H1 (cell line): ENCODE measurements at regions of chr9 and their contacts with region 1.

Region 1: DNA sequence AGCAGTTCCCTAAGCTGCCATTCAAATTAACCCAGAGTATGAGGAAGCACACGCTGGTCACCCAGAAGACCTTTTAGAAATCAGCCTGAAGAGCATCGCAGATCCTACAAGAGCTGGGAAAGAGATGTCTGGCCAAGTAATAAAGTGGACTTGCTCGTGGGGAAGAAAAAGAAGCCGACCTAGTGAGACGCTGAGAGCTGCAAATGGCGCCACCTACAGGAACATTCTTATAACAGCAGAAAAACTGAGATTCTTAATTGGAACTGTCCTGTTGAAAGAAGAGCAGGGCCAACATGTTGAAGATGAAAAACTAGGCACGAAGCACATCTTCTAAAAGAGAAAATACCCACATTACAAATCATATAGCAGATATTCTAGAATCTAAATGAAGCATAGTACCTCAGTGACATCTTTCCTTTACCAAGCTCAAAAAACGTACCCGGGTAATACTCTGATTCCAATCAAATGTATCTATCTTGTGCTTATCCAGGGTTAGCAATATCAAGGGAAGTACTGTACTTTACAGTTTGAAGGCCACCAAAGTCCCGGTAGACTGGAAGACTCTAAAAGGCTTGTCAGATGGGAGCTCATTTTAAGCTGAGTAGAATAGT is 3.9 kb upstream of the GNAQ start:
- DNase-seq: no peak
- H3K4me3 ChIP-seq: no peak overlapping the region
- H3K27ac ChIP-seq: no peak overlapping the region
- H3K4me1 ChIP-seq: peaks cover 0 to 5% (median 0%) of the 10 kb centered on the region in 4 experiments; a peak in 3 of 7 replicates
- H3K27me3 ChIP-seq: no peaks in the 10 kb centered on the region
- CTCF ChIP-seq: peak; percentile 16 to 76 (median 74)
- EP300 ChIP-seq: no peak
- POLR2A ChIP-seq: no peak
- RAD21 ChIP-seq: peak; percentile 79 to 88

Region 2: GRCh38 chr9:77865385-77866047 is 170.0 kb before region 1 on chr9:
- CTCF ChIA-PET with region 1: no interaction called
- POLR2A ChIA-PET with region 1: no interaction called
- DNase-seq: no peak
- H3K4me3 ChIP-seq: no peak overlapping the region
- H3K27ac ChIP-seq: no peak overlapping the region
- H3K4me1 ChIP-seq: no peaks in the 10 kb centered on the region
- H3K27me3 ChIP-seq: no peaks in the 10 kb centered on the region
- CTCF ChIP-seq: no peak
- EP300 ChIP-seq: no peak
- POLR2A ChIP-seq: no peak
- RAD21 ChIP-seq: no peak

Region 3: GRCh38 chr9:77896938-77897667 is 138.4 kb before region 1 on chr9:
- CTCF ChIA-PET with region 1: interaction called, 13 read pairs
- POLR2A ChIA-PET with region 1: no interaction called
- DNase-seq: no peak
- H3K4me3 ChIP-seq: no peak overlapping the region
- H3K27ac ChIP-seq: no peak overlapping the region
- H3K4me1 ChIP-seq: peaks cover 0 to 3% (median 2%) of the 10 kb centered on the region in 4 experiments; a peak in 3 of 7 replicates
- H3K27me3 ChIP-seq: no peaks in the 10 kb centered on the region
- CTCF ChIP-seq: peak; percentile 34 to 62 (median 55)
- EP300 ChIP-seq: no peak
- POLR2A ChIP-seq: no peak
- RAD21 ChIP-seq: peak; percentile 44 to 50; a peak in 3 of 4 replicates

Region 4: GRCh38 chr9:77997611-77998284 is 37.7 kb before region 1 on chr9:
- CTCF ChIA-PET with region 1: interaction called, 22 read pairs
- POLR2A ChIA-PET with region 1: interaction called, 4 read pairs
- DNase-seq: no peak
- H3K4me3 ChIP-seq: no peak overlapping the region
- H3K27ac ChIP-seq: no peak overlapping the region
- H3K4me1 ChIP-seq: peaks cover 0 to 2% (median 0%) of the 10 kb centered on the region in 4 experiments; a peak in 1 of 7 replicates
- H3K27me3 ChIP-seq: no peaks in the 10 kb centered on the region
- CTCF ChIP-seq: no peak
- EP300 ChIP-seq: no peak
- POLR2A ChIP-seq: no peak
- RAD21 ChIP-seq: no peak

Region 5: DNA sequence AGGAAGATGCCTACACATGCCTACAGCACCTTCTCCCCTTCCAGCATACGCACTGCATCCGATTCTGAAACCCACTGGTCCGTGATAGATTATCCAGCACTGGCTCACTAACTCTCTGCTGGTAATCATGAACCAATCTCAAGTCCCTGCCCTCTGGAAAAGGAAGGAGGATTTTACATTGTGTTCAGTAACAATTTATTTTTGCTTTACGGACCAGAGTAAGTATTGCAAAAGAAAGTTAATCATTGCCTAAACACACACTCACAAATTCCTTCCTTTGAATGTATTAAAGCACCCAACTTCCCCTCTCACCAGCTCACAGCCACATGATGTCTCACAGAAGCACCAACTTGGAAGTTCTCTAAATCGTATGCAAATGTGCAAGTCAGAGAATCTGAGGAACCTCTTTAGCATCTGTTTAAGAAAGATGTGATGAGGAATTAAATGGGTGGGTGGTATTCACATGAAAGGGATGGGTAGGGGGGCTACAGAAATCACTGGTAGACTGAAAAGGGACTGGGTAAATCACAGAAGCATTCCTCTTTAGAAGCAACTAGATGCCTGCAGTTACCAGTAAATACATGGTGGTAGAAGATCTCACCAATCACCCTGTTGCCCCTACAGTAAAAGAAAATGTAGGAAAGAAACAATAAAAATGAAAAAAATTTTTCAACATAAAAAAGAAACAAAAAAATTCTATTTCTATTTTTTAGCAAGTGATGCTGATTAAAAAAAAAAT is 12.3 kb before region 1 on chr9:
- CTCF ChIA-PET with region 1: interaction called, 11 read pairs
- POLR2A ChIA-PET with region 1: interaction called, 10 read pairs
- DNase-seq: no peak
- H3K4me3 ChIP-seq: no peak overlapping the region
- H3K27ac ChIP-seq: no peak overlapping the region
- H3K4me1 ChIP-seq: peaks cover 8 to 28% (median 21%) of the 10 kb centered on the region in 4 experiments
- H3K27me3 ChIP-seq: no peaks in the 10 kb centered on the region
- CTCF ChIP-seq: no peak
- EP300 ChIP-seq: no peak
- POLR2A ChIP-seq: no peak
- RAD21 ChIP-seq: no peak

Region 6: GRCh38 chr9:78053627-78054026 is 18.1 kb after region 1 on chr9:
- CTCF ChIA-PET with region 1: interaction called, 27 read pairs
- POLR2A ChIA-PET with region 1: interaction called, 3 read pairs
- DNase-seq: no peak
- H3K4me3 ChIP-seq: no peak overlapping the region
- H3K27ac ChIP-seq: no peak overlapping the region
- H3K4me1 ChIP-seq: no peaks in the 10 kb centered on the region
- H3K27me3 ChIP-seq: no peaks in the 10 kb centered on the region
- CTCF ChIP-seq: no peak
- EP300 ChIP-seq: no peak
- POLR2A ChIP-seq: no peak
- RAD21 ChIP-seq: no peak